Left colon (tissue), 2 donors: ENCODE measurements at regions of chr3 and their contacts with region 1.

Region 1: GRCh38 chr3:105686278-105686897 is 182.4 kb downstream of the CBLB start:
- DNase-seq: no peak
- ATAC-seq: peak; percentile 34

Region 2: GRCh38 chr3:104974316-104974715 is 712.1 kb before region 1 on chr3:
- intact Hi-C with region 1: no loop called
- DNase-seq: no peak
- ATAC-seq: no peak

Region 3: GRCh38 chr3:105553851-105554250 is 132.5 kb before region 1 on chr3:
- intact Hi-C with region 1: no loop called
- DNase-seq: no peak
- ATAC-seq: peak; percentile 17

Region 4: GRCh38 chr3:105970283-105970682 is 283.9 kb after region 1 on chr3:
- intact Hi-C with region 1: no loop called
- DNase-seq: no peak
- ATAC-seq: peak; percentile 27

Region 5: GRCh38 chr3:106609666-106610301 is 923.4 kb after region 1 on chr3:
- intact Hi-C with region 1: loop called in 1 of 2 experiments (anchors 10 kb)
- DNase-seq: peak; percentile 27 to 32
- ATAC-seq: peak; percentile 71